ENCODE measurements at regions of chr19 and their contacts with region 1.

Region 1: GRCh38 chr19:2856457-2857050 is 10.6 kb upstream of the ZNF556 start:
- DNase-seq: no peak

Region 2: GRCh38 chr19:2164020-2164998 is 692.2 kb before region 1 on chr19:
- intact Hi-C with region 1: no loop called
- DNase-seq: peak; percentile 91

Region 3: GRCh38 chr19:2820112-2820702 is 36.3 kb before region 1 on chr19:
- intact Hi-C with region 1: loop called in 1 of 2 experiments (anchors 1 kb)
- DNase-seq: no peak

Region 4: GRCh38 chr19:2933490-2933910 is 76.9 kb after region 1 on chr19:
- intact Hi-C with region 1: loop called in 1 of 2 experiments (anchors 10 kb)
- DNase-seq: no peak